CD4-positive, alpha-beta T cell (primary cell): ENCODE measurements at regions of chr19 and their contacts with region 1.

Region 1: DNA sequence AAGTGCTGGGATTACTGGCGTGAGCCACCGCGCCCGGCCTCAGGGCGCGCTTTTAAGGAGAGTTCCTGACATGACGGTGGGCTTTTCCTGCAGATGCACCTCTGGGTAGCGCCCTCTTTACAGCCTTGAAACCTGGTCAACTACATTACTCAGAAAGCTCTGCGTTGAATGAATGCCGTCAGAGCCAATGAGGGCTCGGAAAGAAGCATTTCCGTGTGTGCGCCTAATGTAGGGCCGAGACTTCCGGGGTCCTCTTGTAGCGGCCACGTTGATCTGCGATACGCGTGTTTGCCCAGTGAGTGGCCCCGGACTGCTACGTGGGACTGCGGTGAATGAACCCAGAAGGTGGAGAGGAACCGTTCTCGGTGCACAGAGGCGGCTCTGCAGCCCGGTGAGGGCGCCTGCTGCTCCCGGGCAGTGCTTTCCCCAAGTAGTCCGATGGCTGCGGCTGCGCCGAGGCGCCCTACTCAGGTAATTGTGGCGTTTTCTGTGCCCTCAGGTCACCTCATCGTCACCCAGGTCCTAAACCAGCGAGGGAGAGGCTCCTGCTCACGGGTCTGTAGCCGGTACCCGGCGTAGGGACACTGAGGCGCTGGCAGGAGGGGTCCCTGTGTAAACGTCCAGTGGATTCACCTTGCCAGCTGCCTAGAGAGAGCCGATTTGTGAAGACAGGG is 4.9 kb upstream of the ZNF552 start:
- DNase-seq: peak; percentile 64 to 95 (median 73)
- ATAC-seq: peak; percentile 83
- H3K4me3 ChIP-seq: peak overlapping the region; percentile 98
- H3K4me3 Mint-ChIP-seq: peak overlapping the region; percentile 96
- H3K27ac ChIP-seq: peak overlapping the region; percentile 78 to 90
- H3K27ac Mint-ChIP-seq: peak overlapping the region; percentile 92
- H3K4me1 ChIP-seq: peaks cover 29% of the 10 kb centered on the region
- H3K4me1 Mint-ChIP-seq: peaks cover 56% of the 10 kb centered on the region
- H3K27me3 ChIP-seq: no peaks in the 10 kb centered on the region
- H3K27me3 Mint-ChIP-seq: no peaks in the 10 kb centered on the region
- CTCF ChIP-seq: peak; percentile 34

Region 2: GRCh38 chr19:57746580-57747471 is 72.8 kb before region 1 on chr19 and contains the start of gene ZNF776:
- CTCF ChIA-PET with region 1: no interaction called
- POLR2A ChIA-PET with region 1: interaction called, 10 read pairs
- intact Hi-C with region 1: loop called in 1 of 2 experiments (anchors 1 kb)
- DNase-seq: peak; percentile 65 to 94 (median 74)
- ATAC-seq: peak; percentile 97
- H3K4me3 ChIP-seq: peak within 1 kb of the TSS; percentile 83
- H3K4me3 Mint-ChIP-seq: peak within 1 kb of the TSS; percentile 94
- H3K27ac ChIP-seq: peak within 1 kb of the TSS; percentile 56 to 78
- H3K27ac Mint-ChIP-seq: peak within 1 kb of the TSS; percentile 90
- H3K4me1 ChIP-seq: peaks cover 22% of the 10 kb centered on the region
- H3K4me1 Mint-ChIP-seq: peaks cover 48% of the 10 kb centered on the region
- H3K27me3 ChIP-seq: no peaks in the 10 kb centered on the region
- H3K27me3 Mint-ChIP-seq: no peaks in the 10 kb centered on the region
- CTCF ChIP-seq: no peak
- total RNA-seq, gene ZNF776: 21.7 to 28.4 TPM

Region 3: DNA sequence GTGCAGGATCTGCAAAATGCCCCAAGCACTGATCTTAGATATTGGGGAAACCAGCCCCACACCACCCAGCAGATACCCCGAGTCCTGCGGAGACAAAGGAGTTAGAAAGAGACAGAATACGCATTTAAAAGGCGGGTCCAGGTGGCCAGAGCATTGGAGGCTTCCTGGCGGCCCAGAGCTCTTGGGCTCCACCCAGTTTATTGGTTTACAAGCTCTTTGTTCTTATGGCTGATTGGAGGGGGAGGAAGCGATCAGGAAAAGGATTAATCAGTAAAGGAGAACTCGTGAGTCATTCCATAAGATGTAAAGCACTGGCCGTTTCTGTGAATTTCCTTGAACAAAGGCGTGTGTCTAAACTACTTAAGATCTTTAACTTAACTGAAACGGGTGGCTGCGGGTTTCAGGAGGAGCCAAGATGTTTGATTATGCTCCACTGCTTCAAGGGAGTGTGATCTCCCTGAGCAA is 31.0 kb after region 1 on chr19:
- CTCF ChIA-PET with region 1: interaction called, 6 read pairs
- POLR2A ChIA-PET with region 1: interaction called, 13 read pairs
- intact Hi-C with region 1: loop called in 1 of 2 experiments (anchors 2 kb)
- DNase-seq: peak in 1 of 14 experiments; percentile 8
- ATAC-seq: no peak
- H3K4me3 ChIP-seq: peak overlapping the region; percentile 89
- H3K4me3 Mint-ChIP-seq: peak overlapping the region; percentile 96
- H3K27ac ChIP-seq: peak overlapping the region in 1 of 2 donors; percentile 84
- H3K27ac Mint-ChIP-seq: peak overlapping the region; percentile 97
- H3K4me1 ChIP-seq: peaks cover 24% of the 10 kb centered on the region
- H3K4me1 Mint-ChIP-seq: peaks cover 39% of the 10 kb centered on the region
- H3K27me3 ChIP-seq: no peaks in the 10 kb centered on the region
- H3K27me3 Mint-ChIP-seq: no peaks in the 10 kb centered on the region
- CTCF ChIP-seq: no peak

Region 4: GRCh38 chr19:57903618-57904184 is 84.1 kb after region 1 on chr19:
- CTCF ChIA-PET with region 1: no interaction called
- POLR2A ChIA-PET with region 1: no interaction called
- intact Hi-C with region 1: no loop called
- DNase-seq: no peak
- ATAC-seq: no peak
- H3K4me3 ChIP-seq: no peak overlapping the region
- H3K4me3 Mint-ChIP-seq: no peak overlapping the region
- H3K27ac ChIP-seq: no peak overlapping the region
- H3K27ac Mint-ChIP-seq: peak overlapping the region; percentile 27
- H3K4me1 ChIP-seq: no peaks in the 10 kb centered on the region
- H3K4me1 Mint-ChIP-seq: peaks cover 5% of the 10 kb centered on the region
- H3K27me3 ChIP-seq: no peaks in the 10 kb centered on the region
- H3K27me3 Mint-ChIP-seq: no peaks in the 10 kb centered on the region
- CTCF ChIP-seq: no peak